ENCODE measurements at regions of chr7 and their contacts with region 1.

Region 1: DNA sequence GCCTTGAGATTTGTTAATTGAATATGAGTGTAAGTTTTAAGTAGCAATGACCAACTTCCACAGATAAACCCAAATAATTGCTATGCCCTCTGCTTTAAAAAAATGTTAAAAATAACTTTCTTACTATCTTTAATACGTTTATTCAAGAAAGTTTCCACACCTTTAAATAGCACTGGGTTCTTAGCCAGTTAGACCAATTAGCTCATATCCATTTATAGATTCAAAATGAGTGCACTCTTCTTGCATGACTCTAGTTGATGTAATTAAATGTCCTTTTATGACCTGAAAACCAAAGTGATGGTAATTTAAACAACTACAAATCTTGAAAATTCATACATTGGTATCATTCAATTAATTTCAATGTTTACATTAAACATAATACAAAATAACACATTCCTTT is 50.8 kb upstream of the CACNA2D1 start:
- DNase-seq: no peak
- ATAC-seq: no peak
- H3K4me3 ChIP-seq: no peak overlapping the region
- H3K27ac ChIP-seq: no peak overlapping the region
- H3K4me1 ChIP-seq: no peaks in the 10 kb centered on the region
- H3K27me3 ChIP-seq: no peaks in the 10 kb centered on the region; the same call in none of the 2 replicates
- CTCF ChIP-seq: no peak
- POLR2A ChIP-seq: no peak
- RAD21 ChIP-seq: no peak

Region 2: DNA sequence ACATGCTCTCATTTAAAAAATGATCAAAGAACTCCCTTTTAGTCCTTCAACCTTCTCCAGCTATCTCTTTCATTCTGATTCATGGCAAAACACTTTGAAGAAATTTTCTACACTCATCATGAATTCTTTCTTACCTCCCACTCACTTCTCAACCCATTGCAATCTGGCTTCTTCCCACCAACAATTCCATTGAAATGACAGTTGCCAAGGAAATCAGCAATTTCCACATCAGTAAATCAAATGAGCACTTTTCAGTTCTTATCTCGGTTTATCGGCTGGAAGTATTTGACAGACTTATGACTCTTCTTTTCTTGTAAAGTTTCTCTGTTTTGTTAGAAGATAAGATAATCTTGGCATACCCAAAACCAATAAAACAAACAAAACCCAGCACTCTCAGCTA is 48.2 kb after region 1 on chr7:
- CTCF ChIA-PET with region 1: no interaction called
- POLR2A ChIA-PET with region 1: no interaction called
- dilution Hi-C with region 1: no loop called
- in situ Hi-C with region 1: no loop called
- intact Hi-C with region 1: loop called (anchors 5 kb)
- DNase-seq: peak; percentile 93
- ATAC-seq: peak; percentile 70
- H3K4me3 ChIP-seq: no peak overlapping the region
- H3K27ac ChIP-seq: no peak overlapping the region
- H3K4me1 ChIP-seq: peaks cover 1% of the 10 kb centered on the region; the same call in 1 of the 2 replicates
- H3K27me3 ChIP-seq: no peaks in the 10 kb centered on the region
- CTCF ChIP-seq: no peak
- POLR2A ChIP-seq: no peak
- RAD21 ChIP-seq: no peak